Transverse colon (tissue), 4 donors: ENCODE measurements at regions of chr9 and their contacts with region 1.

Region 1: DNA sequence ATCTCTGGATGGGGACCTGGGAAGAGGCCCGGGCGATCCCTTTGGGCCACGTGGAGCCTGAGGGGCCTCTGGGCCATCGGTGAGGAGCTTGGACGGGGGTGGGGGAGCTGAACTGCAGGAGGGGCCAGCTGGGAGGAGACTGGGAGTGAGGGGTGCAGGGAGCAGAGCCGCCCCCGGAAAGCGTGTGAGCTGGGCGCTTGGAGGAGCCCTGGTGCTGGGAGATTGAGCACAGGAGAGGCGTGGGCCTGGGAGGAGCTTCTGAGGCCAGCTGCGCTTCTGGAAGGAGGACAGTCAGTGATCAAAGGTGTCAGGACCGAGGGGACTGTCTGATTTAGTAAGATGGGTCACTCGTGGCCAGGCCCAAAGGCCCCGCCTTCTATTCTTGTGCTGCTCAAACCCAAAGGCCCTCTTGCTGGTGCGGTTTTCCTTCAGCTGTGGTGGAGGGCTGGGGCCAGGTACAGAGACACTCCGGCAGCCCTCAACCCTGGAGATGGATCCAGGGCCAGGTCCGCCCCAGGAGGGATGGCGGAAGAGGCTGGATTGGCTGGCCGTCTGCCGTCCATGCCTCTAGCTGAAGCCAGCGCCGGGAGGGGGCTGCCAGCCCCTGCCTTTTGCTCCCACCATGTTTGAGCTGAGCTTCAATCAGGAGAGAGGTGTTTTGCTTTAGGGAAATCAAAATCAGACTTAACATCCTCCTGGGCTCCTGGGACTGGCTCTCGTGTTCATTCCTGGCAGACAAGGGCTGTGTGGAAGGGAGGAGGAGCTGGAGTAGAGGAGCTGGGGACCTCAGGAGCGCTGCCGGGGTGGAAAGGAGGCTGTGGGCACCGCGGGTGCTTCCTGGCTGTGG is 21.6 kb downstream of the NCS1 start:
- DNase-seq: no peak
- H3K4me3 ChIP-seq: no peak overlapping the region
- H3K27ac ChIP-seq: peak overlapping the region; percentile 59 to 87 (median 81)
- H3K4me1 ChIP-seq: peaks cover 15 to 51% (median 33%) of the 10 kb centered on the region in 4 donors
- H3K27me3 ChIP-seq: no peaks in the 10 kb centered on the region
- CTCF ChIP-seq: no peak
- EP300 ChIP-seq: no peak
- POLR2A ChIP-seq: no peak

Region 2: DNA sequence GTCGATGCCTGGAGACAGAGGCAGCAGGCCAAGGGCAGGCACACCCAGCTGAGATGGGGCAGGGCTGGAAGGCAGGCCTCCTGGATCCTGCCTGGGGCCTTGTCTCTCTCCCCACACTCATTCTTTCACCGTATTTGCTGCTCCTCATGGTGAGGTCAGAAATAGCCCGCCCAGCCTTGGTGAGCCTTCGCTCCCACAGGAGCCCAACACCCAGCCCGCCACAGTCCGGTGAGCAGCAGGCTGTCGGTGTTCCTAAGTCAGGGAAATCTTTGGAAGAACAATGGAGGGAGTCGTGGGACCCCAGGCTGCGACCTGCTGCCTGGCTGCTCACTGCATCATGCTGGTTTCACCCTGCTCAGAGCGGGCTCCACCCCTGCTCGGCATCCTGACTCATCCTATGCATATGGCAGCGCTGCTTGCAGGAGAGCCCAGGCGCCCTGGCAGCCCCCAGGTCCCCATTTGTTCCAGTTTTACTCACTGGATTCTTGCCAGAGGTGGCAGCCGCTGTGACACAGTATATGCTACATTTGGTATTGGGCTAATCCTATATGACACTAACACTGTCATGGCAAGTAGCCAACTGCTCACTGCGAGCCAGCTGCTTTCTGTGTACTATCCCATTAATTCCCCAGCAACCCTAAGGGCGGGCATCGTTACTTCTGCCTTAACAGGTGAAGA is 74.8 kb before region 1 on chr9:
- in situ Hi-C with region 1: no loop called
- intact Hi-C with region 1: loop called (anchors 5 kb)
- DNase-seq: no peak
- H3K4me3 ChIP-seq: no peak overlapping the region
- H3K27ac ChIP-seq: peak overlapping the region; percentile 59 to 84 (median 81)
- H3K4me1 ChIP-seq: peaks cover 0 to 21% (median 15%) of the 10 kb centered on the region in 4 donors
- H3K27me3 ChIP-seq: no peaks in the 10 kb centered on the region
- CTCF ChIP-seq: no peak
- EP300 ChIP-seq: no peak
- POLR2A ChIP-seq: no peak

Region 3: DNA sequence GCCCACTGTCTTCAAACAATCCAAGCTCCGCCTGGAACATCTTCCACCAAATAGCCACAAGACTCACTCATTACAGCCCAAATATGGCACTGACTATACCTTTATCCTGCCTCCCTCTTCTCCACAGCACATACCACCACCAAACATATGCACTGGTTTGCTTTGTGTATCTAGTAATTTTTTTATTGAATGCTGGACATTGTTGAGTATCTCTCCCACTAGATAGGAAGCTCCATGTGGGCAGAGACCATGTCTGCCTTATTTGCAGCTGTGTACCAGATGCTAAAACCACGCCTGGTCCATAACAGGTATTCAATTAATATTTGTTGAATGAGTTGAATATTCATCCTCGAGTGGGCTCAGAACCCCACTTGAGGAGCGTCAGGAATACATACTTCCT is 318.4 kb after region 1 on chr9:
- in situ Hi-C with region 1: no loop called
- intact Hi-C with region 1: no loop called
- DNase-seq: no peak
- H3K4me3 ChIP-seq: no peak overlapping the region
- H3K27ac ChIP-seq: no peak overlapping the region
- H3K4me1 ChIP-seq: no peaks in the 10 kb centered on the region
- H3K27me3 ChIP-seq: peaks cover 4% of the 10 kb centered on the region
- CTCF ChIP-seq: no peak
- EP300 ChIP-seq: no peak
- POLR2A ChIP-seq: no peak